ENCODE measurements at regions of chr11 and their contacts with region 1.

Region 1: GRCh38 chr11:15074206-15075161 is 1.1 kb downstream of the CALCB start:
- DNase-seq: peak; percentile 95
- ATAC-seq: peak; percentile 88
- H3K4me3 Mint-ChIP-seq: peak overlapping the region; percentile 80
- H3K27ac Mint-ChIP-seq: peak overlapping the region; percentile 87
- H3K4me1 Mint-ChIP-seq: peaks cover 18% of the 10 kb centered on the region
- H3K27me3 Mint-ChIP-seq: peaks cover 11% of the 10 kb centered on the region

Region 2: DNA sequence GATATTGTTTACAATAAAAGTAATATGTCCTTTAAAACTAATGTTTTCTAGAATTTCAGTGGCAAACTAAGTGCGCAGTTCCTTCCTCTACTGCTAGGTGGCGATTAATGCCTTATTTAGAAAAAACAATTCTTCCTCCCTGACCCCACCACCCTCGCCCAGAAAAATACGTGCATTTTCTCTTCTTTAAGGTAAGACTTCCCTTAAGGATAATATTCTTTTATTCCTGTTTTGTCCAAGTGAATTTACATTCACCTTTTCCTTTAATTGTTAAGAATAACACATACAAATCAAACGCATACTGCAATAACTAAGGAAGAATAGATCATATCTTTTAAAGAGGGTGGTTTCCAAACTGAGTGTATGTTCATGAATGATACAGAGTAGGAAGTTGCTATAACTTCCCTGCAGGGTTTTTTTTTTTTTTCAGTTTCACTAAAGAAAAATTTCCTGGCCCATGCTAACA is 537.3 kb before region 1 on chr11:
- CTCF ChIA-PET with region 1: no interaction called
- POLR2A ChIA-PET with region 1: no interaction called
- intact Hi-C with region 1: loop called in 1 of 2 experiments (anchors 10 kb)
- DNase-seq: peak; percentile 59
- ATAC-seq: peak; percentile 90
- H3K4me3 Mint-ChIP-seq: peak overlapping the region; percentile 59
- H3K27ac Mint-ChIP-seq: peak overlapping the region; percentile 87
- H3K4me1 Mint-ChIP-seq: peaks cover 22% of the 10 kb centered on the region
- H3K27me3 Mint-ChIP-seq: no peaks in the 10 kb centered on the region

Region 3: GRCh38 chr11:14974515-14975251 is 99.8 kb before region 1 on chr11:
- CTCF ChIA-PET with region 1: interaction called, 65 read pairs
- POLR2A ChIA-PET with region 1: interaction called, 4 read pairs
- intact Hi-C with region 1: loop called (anchors 1 kb)
- DNase-seq: peak; percentile 85
- ATAC-seq: peak; percentile 72
- H3K4me3 Mint-ChIP-seq: peak overlapping the region; percentile 54
- H3K27ac Mint-ChIP-seq: no peak overlapping the region
- H3K4me1 Mint-ChIP-seq: peaks cover 27% of the 10 kb centered on the region
- H3K27me3 Mint-ChIP-seq: peaks cover 67% of the 10 kb centered on the region

Region 4: GRCh38 chr11:15027011-15027410 is 47.5 kb before region 1 on chr11:
- CTCF ChIA-PET with region 1: interaction called, 3 read pairs
- POLR2A ChIA-PET with region 1: no interaction called
- intact Hi-C with region 1: loop called in 1 of 2 experiments (anchors 5 kb)
- DNase-seq: no peak
- ATAC-seq: no peak
- H3K4me3 Mint-ChIP-seq: no peak overlapping the region
- H3K27ac Mint-ChIP-seq: no peak overlapping the region
- H3K4me1 Mint-ChIP-seq: peaks cover 3% of the 10 kb centered on the region
- H3K27me3 Mint-ChIP-seq: peaks cover 23% of the 10 kb centered on the region

Region 5: GRCh38 chr11:15053191-15053685 is 21.2 kb before region 1 on chr11:
- CTCF ChIA-PET with region 1: interaction called, 6 read pairs
- POLR2A ChIA-PET with region 1: no interaction called
- intact Hi-C with region 1: loop called (anchors 1 kb)
- DNase-seq: peak; percentile 68
- ATAC-seq: peak; percentile 87
- H3K4me3 Mint-ChIP-seq: no peak overlapping the region
- H3K27ac Mint-ChIP-seq: peak overlapping the region; percentile 84
- H3K4me1 Mint-ChIP-seq: peaks cover 28% of the 10 kb centered on the region
- H3K27me3 Mint-ChIP-seq: peaks cover 5% of the 10 kb centered on the region

Region 6: DNA sequence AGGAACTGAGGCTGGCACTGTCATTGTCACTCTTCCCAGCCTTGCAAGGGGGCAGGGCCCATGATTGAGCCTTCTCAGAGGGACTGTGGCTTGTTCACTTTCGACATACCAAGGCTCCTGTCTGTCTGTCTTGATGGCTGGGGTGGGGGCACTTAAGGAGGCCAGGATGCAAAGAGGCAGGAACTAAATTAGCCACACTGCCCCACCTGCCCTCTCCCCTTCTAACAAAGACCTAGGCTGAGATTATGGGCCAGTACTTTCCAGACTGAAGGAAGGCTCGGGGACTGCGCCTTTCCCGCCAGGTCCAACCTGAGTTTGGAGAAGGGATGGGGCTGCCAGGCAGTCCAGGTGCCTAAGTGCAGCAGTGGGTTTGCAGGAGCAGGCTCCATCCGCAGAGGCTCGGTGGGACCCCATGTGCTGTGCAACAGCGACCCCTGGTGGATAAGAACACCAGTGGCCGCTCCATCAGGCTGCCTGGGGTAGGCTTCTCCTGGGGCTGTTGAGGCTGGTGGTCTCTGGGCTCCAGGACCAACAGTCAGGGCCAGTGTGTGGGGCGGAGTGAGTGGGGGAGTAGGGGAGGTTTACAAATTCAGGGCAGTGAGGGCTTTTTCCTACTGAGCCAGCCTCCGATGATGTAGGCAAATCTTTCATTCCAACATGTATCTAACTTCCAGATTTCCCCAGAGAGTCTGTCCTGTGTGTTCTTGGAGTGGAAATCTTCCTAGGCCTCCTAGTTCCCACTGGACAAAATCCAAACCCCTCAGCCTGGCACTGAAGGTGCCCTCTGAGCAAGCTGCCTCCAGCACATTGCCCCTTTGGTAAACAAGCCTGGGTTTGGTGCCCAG is 134.1 kb after region 1 on chr11:
- CTCF ChIA-PET with region 1: interaction called, 8 read pairs
- POLR2A ChIA-PET with region 1: no interaction called
- intact Hi-C with region 1: loop called in 1 of 2 experiments (anchors 1 kb)
- DNase-seq: peak; percentile 87
- ATAC-seq: peak; percentile 97
- H3K4me3 Mint-ChIP-seq: no peak overlapping the region
- H3K27ac Mint-ChIP-seq: no peak overlapping the region
- H3K4me1 Mint-ChIP-seq: no peaks in the 10 kb centered on the region
- H3K27me3 Mint-ChIP-seq: no peaks in the 10 kb centered on the region

Region 7: GRCh38 chr11:16440136-16440535 is 1365.7 kb after region 1 on chr11:
- CTCF ChIA-PET with region 1: no interaction called
- POLR2A ChIA-PET with region 1: no interaction called
- intact Hi-C with region 1: no loop called
- DNase-seq: no peak
- ATAC-seq: no peak
- H3K4me3 Mint-ChIP-seq: no peak overlapping the region
- H3K27ac Mint-ChIP-seq: no peak overlapping the region
- H3K4me1 Mint-ChIP-seq: no peaks in the 10 kb centered on the region
- H3K27me3 Mint-ChIP-seq: no peaks in the 10 kb centered on the region

Measured in activated CD4-positive, alpha-beta T cell treated with anti-CD3 and anti-CD28 coated beads for 36 hours (primary cell).